T-cell (primary cell): ENCODE measurements at regions of chr6 and their contacts with region 1.

Region 1: DNA sequence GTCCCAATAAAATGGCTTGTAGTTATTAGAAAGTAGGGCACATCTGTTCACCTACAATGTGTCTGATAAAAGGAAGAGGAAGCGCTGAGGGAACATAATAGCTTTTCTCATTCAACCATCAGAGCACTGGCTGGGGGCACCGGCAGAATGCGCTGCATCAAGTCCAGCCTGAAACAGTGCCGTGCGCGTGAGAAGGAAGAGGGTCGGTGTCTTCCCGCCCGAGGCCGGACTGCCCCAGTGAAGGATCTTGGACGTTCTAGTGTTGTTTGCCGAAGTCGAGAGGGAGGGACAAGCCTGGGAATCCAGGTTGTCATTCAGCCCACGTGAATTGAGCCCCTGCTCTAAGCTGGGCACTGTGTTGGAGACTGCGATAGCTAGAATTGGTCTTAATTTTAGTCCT is 61.7 kb upstream of the MPC1 start:
- DNase-seq: no peak
- ATAC-seq: no peak
- H3K4me3 ChIP-seq: no peak overlapping the region
- H3K4me3 Mint-ChIP-seq: no peak overlapping the region
- H3K27ac ChIP-seq: no peak overlapping the region
- H3K27ac Mint-ChIP-seq: no peak overlapping the region
- H3K4me1 ChIP-seq: peaks cover 2 to 7% of the 10 kb centered on the region in 2 experiments
- H3K4me1 Mint-ChIP-seq: peaks cover 7 to 10% (median 8%) of the 10 kb centered on the region in 3 donors
- H3K27me3 ChIP-seq: peaks cover 0 to 14% of the 10 kb centered on the region in 2 experiments
- H3K27me3 Mint-ChIP-seq: peaks cover 0 to 7% of the 10 kb centered on the region in 2 donors

Region 2: DNA sequence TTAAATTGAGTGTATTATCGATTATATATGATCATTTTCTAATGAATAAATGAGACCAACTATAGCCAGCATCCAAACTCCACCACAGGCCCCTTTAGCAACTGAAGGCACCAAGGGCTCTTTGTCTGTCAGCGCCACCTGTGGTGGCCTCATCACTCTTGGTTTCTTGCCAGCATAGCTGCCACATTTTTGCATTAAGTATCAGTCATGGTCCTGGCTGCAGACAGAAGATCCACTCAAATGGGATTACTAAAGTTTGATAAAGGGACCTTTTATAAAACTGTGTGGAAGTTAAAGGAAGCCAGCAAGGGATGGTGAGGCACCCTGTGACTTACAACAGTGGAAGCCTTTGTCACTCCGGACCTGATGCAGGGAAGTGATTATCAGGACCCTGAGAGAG is 1298.0 kb before region 1 on chr6:
- CTCF ChIA-PET with region 1: no interaction called
- POLR2A ChIA-PET with region 1: no interaction called
- DNase-seq: no peak
- ATAC-seq: no peak
- H3K4me3 ChIP-seq: no peak overlapping the region
- H3K4me3 Mint-ChIP-seq: no peak overlapping the region
- H3K27ac ChIP-seq: no peak overlapping the region
- H3K27ac Mint-ChIP-seq: no peak overlapping the region
- H3K4me1 ChIP-seq: no peaks in the 10 kb centered on the region
- H3K4me1 Mint-ChIP-seq: no peaks in the 10 kb centered on the region
- H3K27me3 ChIP-seq: no peaks in the 10 kb centered on the region
- H3K27me3 Mint-ChIP-seq: no peaks in the 10 kb centered on the region

Region 3: DNA sequence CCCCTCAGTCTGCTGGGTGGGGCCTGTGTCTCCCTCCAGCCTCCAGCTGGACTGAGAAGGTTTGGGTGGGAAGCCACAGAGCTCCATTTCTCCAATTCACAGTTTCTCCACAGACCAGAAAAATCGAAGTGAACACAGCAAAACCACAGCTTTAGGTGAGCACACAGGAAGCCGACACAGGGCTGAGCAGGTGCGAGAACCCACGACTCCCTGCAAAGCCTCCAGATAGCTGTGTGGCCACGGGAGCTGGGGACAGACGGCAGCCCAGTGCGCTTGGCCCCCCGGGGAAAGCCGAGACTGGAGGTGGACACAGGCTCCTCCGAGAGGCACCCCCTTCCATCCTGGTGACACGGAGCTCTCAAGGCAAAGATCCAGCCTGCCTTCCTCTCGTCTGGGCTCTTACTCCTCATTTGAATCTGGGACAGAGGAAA is 32.7 kb before region 1 on chr6:
- CTCF ChIA-PET with region 1: interaction called in 1 of 2 experiments, 10 read pairs
- POLR2A ChIA-PET with region 1: no interaction called
- DNase-seq: peak in 32 of 35 experiments; percentile 10 to 67 (median 36)
- ATAC-seq: peak; percentile 75 to 80 (median 78)
- H3K4me3 ChIP-seq: peak overlapping the region; percentile 21 to 56
- H3K4me3 Mint-ChIP-seq: peak overlapping the region; percentile 69 to 81 (median 73)
- H3K27ac ChIP-seq: peak overlapping the region; percentile 53
- H3K27ac Mint-ChIP-seq: peak overlapping the region; percentile 97
- H3K4me1 ChIP-seq: peaks cover 49 to 62% of the 10 kb centered on the region in 2 experiments
- H3K4me1 Mint-ChIP-seq: peaks cover 72 to 77% (median 77%) of the 10 kb centered on the region in 3 donors
- H3K27me3 ChIP-seq: no peaks in the 10 kb centered on the region
- H3K27me3 Mint-ChIP-seq: no peaks in the 10 kb centered on the region

Region 4: GRCh38 chr6:166515072-166515810 is 70.8 kb after region 1 on chr6:
- CTCF ChIA-PET with region 1: no interaction called
- POLR2A ChIA-PET with region 1: no interaction called
- DNase-seq: peak in 3 of 35 experiments; percentile 16 to 38 (median 17)
- ATAC-seq: peak in 3 of 4 experiments; percentile 50 to 70 (median 58)
- H3K4me3 ChIP-seq: no peak overlapping the region
- H3K4me3 Mint-ChIP-seq: no peak overlapping the region
- H3K27ac ChIP-seq: no peak overlapping the region
- H3K27ac Mint-ChIP-seq: no peak overlapping the region
- H3K4me1 ChIP-seq: peaks cover 0 to 6% of the 10 kb centered on the region in 2 experiments
- H3K4me1 Mint-ChIP-seq: peaks cover 4 to 18% (median 7%) of the 10 kb centered on the region in 3 donors
- H3K27me3 ChIP-seq: no peaks in the 10 kb centered on the region
- H3K27me3 Mint-ChIP-seq: no peaks in the 10 kb centered on the region